Activated naive CD4-positive, alpha-beta T cell treated with anti-CD3 and anti-CD28 coated beads, Interleukin-2, amount 10 ng/mL, durations not matched to agents 7 days and 5 days (primary cell): ENCODE measurements at regions of chr17 and their contacts with region 1.

Region 1: GRCh38 chr17:38735161-38735997 is 5.2 kb downstream of the CISD3 start:
- DNase-seq: peak; percentile 82
- H3K4me3 Mint-ChIP-seq: no peak overlapping the region
- H3K27ac Mint-ChIP-seq: peak overlapping the region; percentile 42
- H3K4me1 Mint-ChIP-seq: peaks cover 47% of the 10 kb centered on the region
- H3K27me3 Mint-ChIP-seq: peaks cover 23% of the 10 kb centered on the region

Region 2: DNA sequence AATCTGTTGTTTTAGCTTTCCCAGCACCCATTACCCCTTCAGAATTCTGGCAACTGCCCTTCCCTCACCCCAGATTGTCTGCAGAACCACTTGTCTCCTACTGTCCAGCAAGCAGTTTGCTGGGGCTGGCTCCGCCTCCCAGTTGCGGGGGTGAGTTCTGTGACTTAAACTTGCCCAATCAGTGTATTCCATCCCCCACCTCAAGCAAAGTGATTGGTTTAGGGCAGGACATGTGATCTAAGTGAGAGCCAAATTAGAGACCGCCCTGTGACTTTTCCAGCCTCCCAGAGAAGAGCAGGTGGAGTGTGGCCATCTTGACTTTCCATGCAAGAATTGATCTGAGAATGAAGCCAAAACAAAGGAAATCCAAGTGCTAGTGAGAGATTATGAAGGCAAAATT is 106.9 kb before region 1 on chr17:
- CTCF ChIA-PET with region 1: no interaction called
- DNase-seq: no peak
- H3K4me3 Mint-ChIP-seq: no peak overlapping the region
- H3K27ac Mint-ChIP-seq: no peak overlapping the region
- H3K4me1 Mint-ChIP-seq: peaks cover 3% of the 10 kb centered on the region
- H3K27me3 Mint-ChIP-seq: peaks cover 30% of the 10 kb centered on the region

Region 3: GRCh38 chr17:38685491-38685890 is 49.9 kb before region 1 on chr17:
- CTCF ChIA-PET with region 1: interaction called, 12 read pairs
- DNase-seq: no peak
- H3K4me3 Mint-ChIP-seq: no peak overlapping the region
- H3K27ac Mint-ChIP-seq: no peak overlapping the region
- H3K4me1 Mint-ChIP-seq: no peaks in the 10 kb centered on the region
- H3K27me3 Mint-ChIP-seq: peaks cover 33% of the 10 kb centered on the region

Region 4: DNA sequence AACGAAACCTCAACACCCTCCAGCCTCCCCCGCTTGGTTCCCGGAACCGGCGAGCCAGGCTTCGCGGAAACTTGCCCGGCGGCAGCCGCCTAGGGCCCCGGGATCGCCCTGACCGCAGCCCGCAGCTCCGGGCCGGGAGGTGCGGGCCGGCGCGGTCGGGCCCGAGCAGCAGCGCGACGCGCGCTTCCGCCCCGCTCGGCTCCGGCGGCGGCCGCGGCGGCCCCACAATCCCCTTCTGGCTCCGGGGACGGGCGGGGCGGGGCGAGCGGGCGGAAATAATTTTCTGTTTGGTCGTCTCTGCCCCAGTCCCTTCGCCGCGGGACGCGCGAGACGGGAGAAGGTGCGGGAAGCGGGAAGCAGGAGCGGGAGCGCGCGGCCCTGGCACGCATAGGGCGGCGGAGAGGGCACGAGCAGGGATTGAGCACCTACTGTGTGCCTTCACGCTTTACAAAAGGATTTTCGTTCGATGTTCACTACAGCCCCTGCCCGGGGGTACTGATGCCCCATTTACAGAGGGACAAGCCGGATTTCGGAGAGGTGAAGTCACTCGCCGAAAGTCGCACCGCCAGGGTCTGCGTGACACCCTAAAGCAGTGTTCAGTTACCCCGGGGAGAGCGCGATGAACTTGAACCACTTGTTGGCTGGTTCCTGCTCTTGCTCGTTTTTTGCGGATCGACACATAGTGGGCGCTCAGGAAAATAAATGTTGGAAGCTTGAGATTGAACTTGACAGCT is 33.0 kb before region 1 on chr17:
- CTCF ChIA-PET with region 1: interaction called, 13 read pairs
- DNase-seq: peak; percentile 89
- H3K4me3 Mint-ChIP-seq: peak overlapping the region; percentile 93
- H3K27ac Mint-ChIP-seq: peak overlapping the region; percentile 98
- H3K4me1 Mint-ChIP-seq: peaks cover 44% of the 10 kb centered on the region
- H3K27me3 Mint-ChIP-seq: peaks cover 5% of the 10 kb centered on the region

Region 5: DNA sequence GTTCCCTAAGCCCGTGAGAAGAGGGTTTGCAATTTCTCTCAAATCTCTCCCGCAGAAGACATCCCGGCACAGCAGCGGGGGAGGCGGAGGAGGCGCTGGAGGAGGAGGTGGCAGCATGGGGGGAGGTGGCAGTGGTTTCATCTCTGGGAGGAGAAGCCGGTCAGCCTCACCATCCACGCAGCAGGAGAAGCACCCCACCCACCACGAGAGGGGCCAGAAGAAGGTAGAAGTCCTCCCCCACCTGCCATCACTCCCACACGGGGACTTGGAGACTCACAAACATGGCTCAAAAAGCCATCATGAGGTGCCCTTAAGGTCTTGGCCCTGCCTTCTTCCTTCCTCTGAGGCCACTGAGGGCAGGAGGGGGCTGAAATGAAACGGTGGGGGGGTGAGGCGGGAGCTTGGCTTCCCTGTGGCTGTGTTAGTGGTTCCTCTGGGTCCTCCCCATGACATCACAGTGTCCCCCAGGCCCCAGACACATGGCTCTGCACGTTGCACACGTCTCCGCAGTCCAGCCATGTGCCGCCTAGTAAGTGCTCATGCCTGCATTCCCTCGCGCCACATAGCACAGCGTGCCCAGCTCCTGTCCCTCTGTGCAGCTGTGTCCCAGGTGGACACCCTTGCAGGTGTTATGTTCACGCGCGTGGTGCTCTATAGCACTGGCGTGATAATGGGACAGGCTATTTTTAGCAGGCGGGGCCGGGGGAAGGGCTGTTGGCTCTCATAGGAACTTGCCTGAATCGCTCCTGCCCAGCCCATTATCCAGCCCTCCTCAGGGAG is 23.4 kb before region 1 on chr17:
- CTCF ChIA-PET with region 1: interaction called, 13 read pairs
- DNase-seq: no peak
- H3K4me3 Mint-ChIP-seq: no peak overlapping the region
- H3K27ac Mint-ChIP-seq: no peak overlapping the region
- H3K4me1 Mint-ChIP-seq: peaks cover 70% of the 10 kb centered on the region
- H3K27me3 Mint-ChIP-seq: no peaks in the 10 kb centered on the region